ENCODE measurements at regions of chr7 and their contacts with region 1.

Region 1: DNA sequence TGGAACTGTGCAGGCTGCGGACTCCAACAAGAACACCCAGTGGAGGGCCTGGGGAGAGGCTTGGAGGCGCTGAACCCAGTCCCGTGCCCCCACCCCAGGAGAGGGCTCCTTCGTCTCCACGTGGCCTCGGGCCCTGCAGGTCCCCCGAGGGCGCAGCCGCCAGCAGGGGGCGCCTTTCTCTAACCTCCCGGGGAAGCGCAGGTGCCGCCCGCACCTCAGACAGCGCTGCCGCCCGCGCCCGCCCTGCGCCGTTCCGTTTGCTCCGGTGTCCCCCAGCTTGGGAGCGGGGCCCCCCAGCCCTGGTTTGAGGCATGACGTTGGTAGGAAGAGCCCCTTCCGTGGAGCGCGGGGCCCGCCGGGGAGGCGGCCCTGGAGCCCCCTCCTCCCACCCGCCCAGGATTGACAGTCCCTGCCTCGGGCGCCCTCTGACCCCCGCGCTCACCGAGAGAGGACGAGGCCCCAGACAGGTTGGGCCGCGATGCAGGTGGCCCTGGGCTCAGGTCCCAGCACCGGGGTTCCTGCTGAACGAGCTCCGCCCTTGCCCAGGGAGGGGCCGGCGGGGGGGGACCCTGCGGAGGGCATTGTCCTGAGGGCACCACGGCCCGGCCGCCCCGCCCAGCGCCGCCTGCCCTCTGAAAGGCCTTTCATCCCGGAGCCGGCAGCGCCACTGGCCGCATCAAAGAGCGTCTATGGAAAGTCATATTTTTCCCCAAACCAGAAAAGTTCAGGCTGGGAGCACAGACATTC is 42.8 kb downstream of the FOXL3 start:
- DNase-seq: peak; percentile 82 to 96 (median 91)
- ATAC-seq: peak; percentile 96
- H3K4me3 ChIP-seq: peak overlapping the region; percentile 38
- H3K4me3 Mint-ChIP-seq: no peak overlapping the region
- H3K27ac ChIP-seq: no peak overlapping the region
- H3K27ac Mint-ChIP-seq: no peak overlapping the region
- H3K4me1 ChIP-seq: peaks cover 22% of the 10 kb centered on the region
- H3K4me1 Mint-ChIP-seq: peaks cover 17% of the 10 kb centered on the region
- H3K27me3 ChIP-seq: no peaks in the 10 kb centered on the region
- H3K27me3 Mint-ChIP-seq: no peaks in the 10 kb centered on the region
- CTCF ChIP-seq: peak; percentile 82

Region 2: GRCh38 chr7:504221-505111 is 171.6 kb after region 1 on chr7:
- CTCF ChIA-PET with region 1: no interaction called
- POLR2A ChIA-PET with region 1: no interaction called
- intact Hi-C with region 1: loop called in 1 of 2 experiments (anchors 5 kb)
- DNase-seq: no peak
- ATAC-seq: no peak
- H3K4me3 ChIP-seq: no peak overlapping the region
- H3K4me3 Mint-ChIP-seq: no peak overlapping the region
- H3K27ac ChIP-seq: no peak overlapping the region
- H3K27ac Mint-ChIP-seq: no peak overlapping the region
- H3K4me1 ChIP-seq: no peaks in the 10 kb centered on the region
- H3K4me1 Mint-ChIP-seq: no peaks in the 10 kb centered on the region
- H3K27me3 ChIP-seq: no peaks in the 10 kb centered on the region
- H3K27me3 Mint-ChIP-seq: no peaks in the 10 kb centered on the region
- CTCF ChIP-seq: no peak

Region 3: GRCh38 chr7:584122-584465 is 251.3 kb after region 1 on chr7:
- CTCF ChIA-PET with region 1: no interaction called
- POLR2A ChIA-PET with region 1: no interaction called
- intact Hi-C with region 1: loop called in 1 of 2 experiments (anchors 5 kb)
- DNase-seq: peak; percentile 85 to 96 (median 91)
- ATAC-seq: peak; percentile 97
- H3K4me3 ChIP-seq: peak overlapping the region; percentile 72
- H3K4me3 Mint-ChIP-seq: peak overlapping the region; percentile 86
- H3K27ac ChIP-seq: peak overlapping the region; percentile 64 to 86
- H3K27ac Mint-ChIP-seq: peak overlapping the region; percentile 95
- H3K4me1 ChIP-seq: peaks cover 30% of the 10 kb centered on the region
- H3K4me1 Mint-ChIP-seq: peaks cover 44% of the 10 kb centered on the region
- H3K27me3 ChIP-seq: no peaks in the 10 kb centered on the region
- H3K27me3 Mint-ChIP-seq: no peaks in the 10 kb centered on the region
- CTCF ChIP-seq: no peak

Region 4: GRCh38 chr7:636396-636795 is 303.6 kb after region 1 on chr7:
- CTCF ChIA-PET with region 1: no interaction called
- POLR2A ChIA-PET with region 1: no interaction called
- intact Hi-C with region 1: loop called in 1 of 2 experiments (anchors 1 kb)
- DNase-seq: peak; percentile 28 to 77 (median 47)
- ATAC-seq: peak; percentile 59
- H3K4me3 ChIP-seq: no peak overlapping the region
- H3K4me3 Mint-ChIP-seq: no peak overlapping the region
- H3K27ac ChIP-seq: no peak overlapping the region
- H3K27ac Mint-ChIP-seq: no peak overlapping the region
- H3K4me1 ChIP-seq: peaks cover 8% of the 10 kb centered on the region
- H3K4me1 Mint-ChIP-seq: peaks cover 18% of the 10 kb centered on the region
- H3K27me3 ChIP-seq: no peaks in the 10 kb centered on the region
- H3K27me3 Mint-ChIP-seq: no peaks in the 10 kb centered on the region
- CTCF ChIP-seq: peak; percentile 23

Region 5: DNA sequence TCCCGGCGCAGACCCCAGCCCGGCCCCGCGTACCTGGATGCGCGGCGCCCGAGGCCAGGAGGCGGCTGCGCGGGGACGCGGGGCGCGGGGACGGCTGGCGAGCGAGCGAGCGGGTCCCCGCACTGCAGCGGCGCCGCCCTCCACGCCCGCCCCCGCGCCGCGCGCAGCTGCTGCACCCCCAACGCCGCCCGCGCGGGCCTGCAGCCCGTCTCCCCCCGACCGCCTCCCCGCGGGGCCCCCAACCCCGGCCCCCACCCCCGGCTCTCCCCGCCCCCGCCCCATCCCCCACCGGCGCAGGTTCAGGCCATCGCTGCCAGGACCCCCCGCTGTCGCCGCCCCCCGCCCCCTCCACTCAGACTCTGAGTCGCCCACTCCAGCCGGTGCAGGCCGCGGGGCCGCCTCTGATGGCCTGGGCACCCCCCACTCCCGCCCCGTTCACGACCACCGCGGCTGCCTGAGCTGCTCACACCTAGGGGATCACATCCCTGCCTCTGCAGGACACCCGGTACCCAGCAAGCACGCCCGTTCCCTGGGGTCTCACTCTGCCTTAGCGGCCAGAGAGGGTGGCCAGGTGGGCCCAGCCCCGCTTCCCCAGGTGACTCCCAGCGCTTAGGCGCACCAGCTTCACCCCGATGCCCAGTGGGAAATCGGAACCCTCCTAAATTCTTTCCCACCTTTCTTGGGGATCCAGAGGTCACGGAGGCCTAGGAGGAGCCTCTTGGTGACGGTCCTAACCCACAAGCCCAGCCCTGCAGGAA is 379.7 kb after region 1 on chr7:
- CTCF ChIA-PET with region 1: no interaction called
- POLR2A ChIA-PET with region 1: no interaction called
- intact Hi-C with region 1: no loop called
- DNase-seq: peak in 6 of 14 experiments; percentile 16 to 53 (median 25)
- ATAC-seq: peak; percentile 87
- H3K4me3 ChIP-seq: peak overlapping the region; percentile 19
- H3K4me3 Mint-ChIP-seq: peak overlapping the region; percentile 82
- H3K27ac ChIP-seq: no peak overlapping the region
- H3K27ac Mint-ChIP-seq: peak overlapping the region; percentile 80
- H3K4me1 ChIP-seq: peaks cover 13% of the 10 kb centered on the region
- H3K4me1 Mint-ChIP-seq: peaks cover 13% of the 10 kb centered on the region
- H3K27me3 ChIP-seq: peaks cover 0 to 4% of the 10 kb centered on the region in 2 experiments
- H3K27me3 Mint-ChIP-seq: no peaks in the 10 kb centered on the region
- CTCF ChIP-seq: no peak

Region 6: DNA sequence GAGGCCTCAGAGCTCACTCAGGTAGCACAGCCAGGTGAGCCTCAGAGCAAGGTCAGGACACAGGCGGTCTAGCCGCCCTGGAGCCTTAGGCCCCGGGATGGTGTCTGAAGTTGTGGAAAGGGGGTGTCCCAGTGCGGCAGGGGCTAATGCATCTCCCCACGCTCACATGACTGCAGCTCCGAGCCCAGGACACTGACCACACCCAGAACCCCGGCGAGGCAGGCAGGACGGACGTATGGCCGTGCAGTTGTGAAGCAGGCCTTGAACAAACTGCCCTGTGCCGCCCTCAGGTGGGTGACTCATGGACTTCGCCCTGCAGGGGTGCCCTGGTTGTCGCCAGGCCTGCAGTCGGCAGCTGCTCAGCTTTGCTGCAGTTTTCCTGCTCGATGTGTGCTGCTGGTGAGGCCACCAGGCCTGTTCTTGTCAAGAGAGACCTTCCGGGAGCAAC is 399.3 kb after region 1 on chr7:
- CTCF ChIA-PET with region 1: no interaction called
- POLR2A ChIA-PET with region 1: no interaction called
- intact Hi-C with region 1: loop called (anchors 2 to 5 kb)
- DNase-seq: peak in 6 of 14 experiments; percentile 9 to 49 (median 16)
- ATAC-seq: peak; percentile 37
- H3K4me3 ChIP-seq: no peak overlapping the region
- H3K4me3 Mint-ChIP-seq: no peak overlapping the region
- H3K27ac ChIP-seq: no peak overlapping the region
- H3K27ac Mint-ChIP-seq: no peak overlapping the region
- H3K4me1 ChIP-seq: peaks cover 11% of the 10 kb centered on the region
- H3K4me1 Mint-ChIP-seq: peaks cover 17% of the 10 kb centered on the region
- H3K27me3 ChIP-seq: no peaks in the 10 kb centered on the region
- H3K27me3 Mint-ChIP-seq: no peaks in the 10 kb centered on the region
- CTCF ChIP-seq: no peak

Region 7: DNA sequence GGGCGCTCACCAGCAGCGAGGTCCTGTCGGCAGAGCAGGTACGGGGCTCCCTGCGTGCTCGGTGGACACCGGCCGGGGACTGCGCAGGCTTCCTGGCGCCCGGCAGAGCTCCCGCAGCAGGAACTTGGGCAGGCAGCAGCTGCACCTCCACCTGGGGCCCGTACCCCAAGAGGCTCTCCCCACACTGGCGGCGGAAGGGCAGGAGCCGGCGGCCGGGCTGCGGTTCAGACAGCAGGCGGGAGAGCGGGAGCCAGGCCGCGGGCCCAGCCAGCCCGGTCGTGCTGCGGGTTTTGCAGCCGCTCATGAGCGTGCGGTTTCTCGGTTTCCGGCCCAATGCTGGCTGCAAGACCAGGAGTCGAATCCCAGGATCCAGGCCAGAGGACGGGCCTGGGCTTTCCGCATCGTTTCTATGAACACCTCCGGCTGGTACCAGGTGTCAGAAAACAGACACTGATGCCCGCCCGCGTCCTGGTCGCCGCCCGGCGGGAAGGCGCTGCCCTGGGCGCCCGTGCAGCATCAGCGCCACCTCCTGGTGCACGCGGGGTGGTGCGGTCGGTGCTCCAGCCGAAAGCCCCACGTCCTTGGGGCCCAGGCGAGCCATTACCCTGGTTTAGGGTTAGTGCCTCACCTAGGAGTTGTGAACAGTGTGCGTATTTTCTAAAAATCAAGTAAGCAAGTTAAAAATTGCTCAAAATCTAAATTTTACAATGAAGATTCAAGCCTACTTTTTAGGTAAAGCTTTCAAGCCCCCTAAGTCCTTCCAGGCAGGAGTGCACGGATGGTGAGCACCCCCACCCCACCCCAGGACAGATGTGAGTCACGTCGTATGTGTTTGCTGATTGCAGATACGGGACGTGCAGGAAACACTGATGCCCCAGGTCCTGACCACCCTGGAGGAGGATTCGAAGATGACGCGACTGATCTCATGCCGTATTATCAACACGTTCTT is 441.6 kb after region 1 on chr7:
- CTCF ChIA-PET with region 1: no interaction called
- POLR2A ChIA-PET with region 1: no interaction called
- intact Hi-C with region 1: loop called (anchors 1 kb)
- DNase-seq: peak; percentile 34 to 79 (median 58)
- ATAC-seq: peak; percentile 93
- H3K4me3 ChIP-seq: no peak overlapping the region
- H3K4me3 Mint-ChIP-seq: no peak overlapping the region
- H3K27ac ChIP-seq: no peak overlapping the region
- H3K27ac Mint-ChIP-seq: no peak overlapping the region
- H3K4me1 ChIP-seq: no peaks in the 10 kb centered on the region
- H3K4me1 Mint-ChIP-seq: no peaks in the 10 kb centered on the region
- H3K27me3 ChIP-seq: no peaks in the 10 kb centered on the region
- H3K27me3 Mint-ChIP-seq: no peaks in the 10 kb centered on the region
- CTCF ChIP-seq: peak; percentile 94